Left lung (tissue), 14 donors: ENCODE measurements at regions of chr3 and their contacts with region 1.

Region 1: GRCh38 chr3:143951351-143951971 is 20.2 kb upstream of the DIPK2A start:
- DNase-seq: peak in 1 of 4 donors; percentile 46
- ATAC-seq: no peak
- H3K4me3 ChIP-seq: no peak overlapping the region
- H3K27ac ChIP-seq: no peak overlapping the region
- H3K4me1 ChIP-seq: no peaks in the 10 kb centered on the region
- H3K27me3 ChIP-seq: no peaks in the 10 kb centered on the region
- CTCF ChIP-seq: peak; percentile 72 to 77

Region 2: GRCh38 chr3:143751643-143752178 is 199.8 kb before region 1 on chr3:
- intact Hi-C with region 1: no loop called
- DNase-seq: no peak
- ATAC-seq: no peak
- H3K4me3 ChIP-seq: no peak overlapping the region
- H3K27ac ChIP-seq: no peak overlapping the region
- H3K4me1 ChIP-seq: peaks cover 0 to 21% of the 10 kb centered on the region in 2 donors
- H3K27me3 ChIP-seq: no peaks in the 10 kb centered on the region
- CTCF ChIP-seq: no peak

Region 3: DNA sequence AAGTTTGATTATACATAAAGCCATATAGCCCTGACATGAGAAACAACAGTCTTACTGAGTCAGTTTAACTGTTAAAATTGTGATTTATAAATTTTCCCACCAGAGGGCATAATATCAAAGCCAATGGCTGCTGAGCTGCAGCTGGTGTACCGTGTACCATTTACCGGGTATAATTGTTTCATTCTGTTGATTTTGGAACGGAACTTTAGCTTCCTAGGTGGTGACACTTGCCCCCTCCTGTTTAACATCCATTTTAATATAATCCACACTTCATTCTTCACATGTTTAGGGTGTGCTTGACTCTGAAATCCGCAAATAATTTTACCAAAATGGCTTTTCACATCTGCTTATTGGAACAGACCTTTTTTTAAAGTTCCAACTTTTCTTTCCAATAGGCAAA is 176.0 kb before region 1 on chr3:
- intact Hi-C with region 1: loop called in 1 of 2 experiments (anchors 5 kb)
- DNase-seq: peak in 1 of 4 donors; percentile 51
- ATAC-seq: peak; percentile 86
- H3K4me3 ChIP-seq: no peak overlapping the region
- H3K27ac ChIP-seq: no peak overlapping the region
- H3K4me1 ChIP-seq: peaks cover 0 to 6% of the 10 kb centered on the region in 2 donors
- H3K27me3 ChIP-seq: no peaks in the 10 kb centered on the region
- CTCF ChIP-seq: peak; percentile 34 to 54

Region 4: DNA sequence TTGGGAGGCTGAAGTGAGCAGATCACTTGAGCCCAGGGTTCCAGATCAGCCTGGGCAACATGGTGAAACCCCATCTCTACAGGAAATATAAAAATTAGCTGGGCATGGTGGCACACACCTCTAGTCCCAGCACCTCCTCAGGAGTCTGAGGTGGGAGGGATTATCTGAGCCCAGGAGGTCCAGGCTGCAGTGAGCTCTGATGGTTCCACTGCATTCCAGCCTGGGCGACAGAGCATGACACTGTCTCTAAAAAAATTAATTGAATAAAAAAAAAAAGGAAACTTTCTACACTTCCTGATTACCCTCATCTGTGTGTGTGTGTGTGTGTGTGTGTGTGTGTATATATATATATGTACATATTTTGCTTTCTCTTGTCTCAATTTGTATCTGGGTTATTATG is 51.6 kb after region 1 on chr3:
- intact Hi-C with region 1: no loop called
- DNase-seq: no peak
- ATAC-seq: no peak
- H3K4me3 ChIP-seq: no peak overlapping the region
- H3K27ac ChIP-seq: no peak overlapping the region
- H3K4me1 ChIP-seq: no peaks in the 10 kb centered on the region
- H3K27me3 ChIP-seq: no peaks in the 10 kb centered on the region
- CTCF ChIP-seq: no peak